ENCODE measurements at regions of chr10 and their contacts with region 1.

Region 1: DNA sequence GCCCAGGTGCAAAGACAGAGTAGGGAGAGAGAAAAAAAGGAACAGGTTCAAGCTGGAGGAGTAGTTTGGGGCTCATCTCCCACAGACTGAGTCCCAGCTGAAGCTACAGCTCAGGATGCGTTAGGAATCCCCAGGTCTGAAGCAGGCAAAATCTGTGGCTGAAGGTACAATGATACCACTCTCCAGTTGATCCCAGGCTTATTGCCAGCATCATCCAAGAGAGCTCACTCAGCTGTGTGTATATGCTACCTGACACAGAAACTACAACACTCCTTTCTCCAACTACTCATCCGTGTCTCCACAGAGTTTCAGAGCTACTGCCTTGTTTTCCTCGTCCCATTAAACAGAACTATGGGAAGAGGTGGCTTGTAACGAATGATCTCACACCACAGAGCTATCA is 851.3 kb downstream of the GRID1 start:
- DNase-seq: no peak
- H3K4me3 ChIP-seq: no peak overlapping the region
- H3K27ac ChIP-seq: no peak overlapping the region
- H3K4me1 ChIP-seq: no peaks in the 10 kb centered on the region
- H3K27me3 ChIP-seq: no peaks in the 10 kb centered on the region
- CTCF ChIP-seq: no peak
- POLR2A ChIP-seq: no peak

Region 2: DNA sequence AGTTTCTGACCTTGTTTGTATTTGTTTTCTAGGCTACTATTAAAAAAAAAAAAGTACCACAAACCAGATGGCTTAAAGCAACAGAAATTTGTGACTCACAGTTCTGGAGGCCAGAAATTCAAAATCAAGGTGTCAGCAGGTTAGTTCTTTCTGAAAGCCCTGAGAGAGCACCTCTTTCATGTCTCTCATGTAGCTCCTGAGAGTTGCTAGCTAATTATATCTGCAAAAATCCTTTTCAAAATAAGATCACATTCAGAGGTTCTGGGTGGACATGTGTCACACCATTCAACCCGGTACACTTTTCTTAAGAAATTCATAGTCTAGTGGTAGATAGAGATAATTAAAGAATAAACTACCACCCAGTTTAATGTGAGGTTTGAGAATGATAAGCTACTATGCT is 37.3 kb before region 1 on chr10:
- intact Hi-C with region 1: no loop called
- DNase-seq: no peak
- H3K4me3 ChIP-seq: no peak overlapping the region
- H3K27ac ChIP-seq: no peak overlapping the region
- H3K4me1 ChIP-seq: no peaks in the 10 kb centered on the region
- H3K27me3 ChIP-seq: no peaks in the 10 kb centered on the region
- CTCF ChIP-seq: no peak
- POLR2A ChIP-seq: no peak

Region 3: DNA sequence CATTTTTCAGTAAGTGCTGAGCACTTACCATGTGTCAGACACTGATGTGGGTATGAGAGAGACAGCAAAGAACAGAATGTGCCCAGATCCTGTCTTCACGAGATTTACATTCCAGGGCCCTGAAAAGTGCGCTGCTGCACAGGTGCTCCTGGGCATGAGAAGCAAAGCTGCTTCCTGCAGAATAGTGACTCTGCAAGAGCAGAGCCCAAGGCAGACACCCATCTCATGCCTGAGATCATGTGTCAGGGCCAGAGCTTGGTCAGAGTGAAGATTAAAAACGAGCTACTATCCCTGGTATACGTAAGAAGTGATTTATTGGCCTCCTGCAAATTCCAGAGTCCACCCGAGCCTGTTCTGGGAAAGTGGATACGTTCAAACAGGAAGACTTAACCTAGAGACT is 26.8 kb after region 1 on chr10:
- intact Hi-C with region 1: no loop called
- DNase-seq: no peak
- H3K4me3 ChIP-seq: no peak overlapping the region
- H3K27ac ChIP-seq: no peak overlapping the region
- H3K4me1 ChIP-seq: no peaks in the 10 kb centered on the region
- H3K27me3 ChIP-seq: no peaks in the 10 kb centered on the region
- CTCF ChIP-seq: no peak
- POLR2A ChIP-seq: no peak

Region 4: GRCh38 chr10:85934586-85934985 is 419.3 kb after region 1 on chr10:
- intact Hi-C with region 1: loop called (anchors 5 kb)
- DNase-seq: no peak
- H3K4me3 ChIP-seq: no peak overlapping the region
- H3K27ac ChIP-seq: no peak overlapping the region
- H3K4me1 ChIP-seq: no peaks in the 10 kb centered on the region
- H3K27me3 ChIP-seq: no peaks in the 10 kb centered on the region
- CTCF ChIP-seq: no peak
- POLR2A ChIP-seq: no peak

Measured in vagina (tissue), 2 donors.